ENCODE measurements at regions of chr10 and their contacts with region 1.

Region 1: GRCh38 chr10:484925-485661 is 204.4 kb downstream of the DIP2C start:
- DNase-seq: peak; percentile 25
- H3K4me3 ChIP-seq: peak overlapping the region; percentile 42 to 53 (median 51)
- H3K27ac ChIP-seq: no peak overlapping the region
- H3K4me1 ChIP-seq: no peaks in the 10 kb centered on the region
- H3K27me3 ChIP-seq: no peaks in the 10 kb centered on the region
- CTCF ChIP-seq: no peak

Region 2: GRCh38 chr10:526651-527311 is 41.7 kb after region 1 on chr10:
- CTCF ChIA-PET with region 1: no interaction called
- dilution Hi-C with region 1: loop called (anchors 5 kb)
- in situ Hi-C with region 1: no loop called
- intact Hi-C with region 1: no loop called
- DNase-seq: no peak
- H3K4me3 ChIP-seq: no peak overlapping the region
- H3K27ac ChIP-seq: no peak overlapping the region
- H3K4me1 ChIP-seq: no peaks in the 10 kb centered on the region
- H3K27me3 ChIP-seq: no peaks in the 10 kb centered on the region
- CTCF ChIP-seq: no peak